ENCODE measurements at regions of chr12 and their contacts with region 1.

Region 1: DNA sequence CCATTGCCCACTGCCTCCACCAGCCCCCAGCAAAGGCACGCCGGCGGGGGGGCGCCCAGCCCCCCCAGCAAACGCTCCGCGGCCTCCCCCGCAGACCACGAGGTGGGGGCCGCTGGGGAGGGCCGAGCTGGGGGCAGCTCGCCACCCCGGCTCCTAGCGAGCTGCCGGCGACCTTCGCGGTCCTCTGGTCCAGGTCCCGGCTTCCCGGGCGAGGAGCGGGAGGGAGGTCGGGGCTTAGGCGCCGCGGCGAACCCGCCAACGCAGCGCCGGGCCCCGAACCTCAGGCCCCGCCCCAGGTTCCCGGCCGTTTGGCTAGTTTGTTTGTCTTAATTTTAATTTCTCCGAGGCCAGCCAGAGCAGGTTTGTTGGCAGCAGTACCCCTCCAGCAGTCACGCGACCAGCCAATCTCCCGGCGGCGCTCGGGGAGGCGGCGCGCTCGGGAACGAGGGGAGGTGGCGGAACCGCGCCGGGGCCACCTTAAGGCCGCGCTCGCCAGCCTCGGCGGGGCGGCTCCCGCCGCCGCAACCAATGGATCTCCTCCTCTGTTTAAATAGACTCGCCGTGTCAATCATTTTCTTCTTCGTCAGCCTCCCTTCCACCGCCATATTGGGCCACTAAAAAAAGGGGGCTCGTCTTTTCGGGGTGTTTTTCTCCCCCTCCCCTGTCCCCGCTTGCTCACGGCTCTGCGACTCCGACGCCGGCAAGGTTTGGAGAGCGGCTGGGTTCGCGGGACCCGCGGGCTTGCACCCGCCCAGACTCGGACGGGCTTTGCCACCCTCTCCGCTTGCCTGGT is at the start of gene CDKN1B:
- DNase-seq: peak; percentile 92
- H3K4me3 Mint-ChIP-seq: peak within 1 kb of the TSS; percentile 98
- H3K27ac Mint-ChIP-seq: peak within 1 kb of the TSS; percentile 98
- H3K4me1 Mint-ChIP-seq: peaks cover 45% of the 10 kb centered on the region
- H3K27me3 Mint-ChIP-seq: no peaks in the 10 kb centered on the region
- total RNA-seq, gene CDKN1B: 52.4 to 52.8 TPM

Region 2: GRCh38 chr12:12486661-12487240 is 230.2 kb before region 1 on chr12:
- CTCF ChIA-PET with region 1: no interaction called
- POLR2A ChIA-PET with region 1: interaction called, 10 read pairs
- intact Hi-C with region 1: loop called (anchors 1 kb)
- DNase-seq: peak; percentile 59
- H3K4me3 Mint-ChIP-seq: peak overlapping the region; percentile 6
- H3K27ac Mint-ChIP-seq: peak overlapping the region; percentile 99
- H3K4me1 Mint-ChIP-seq: peaks cover 56% of the 10 kb centered on the region
- H3K27me3 Mint-ChIP-seq: no peaks in the 10 kb centered on the region

Region 3: DNA sequence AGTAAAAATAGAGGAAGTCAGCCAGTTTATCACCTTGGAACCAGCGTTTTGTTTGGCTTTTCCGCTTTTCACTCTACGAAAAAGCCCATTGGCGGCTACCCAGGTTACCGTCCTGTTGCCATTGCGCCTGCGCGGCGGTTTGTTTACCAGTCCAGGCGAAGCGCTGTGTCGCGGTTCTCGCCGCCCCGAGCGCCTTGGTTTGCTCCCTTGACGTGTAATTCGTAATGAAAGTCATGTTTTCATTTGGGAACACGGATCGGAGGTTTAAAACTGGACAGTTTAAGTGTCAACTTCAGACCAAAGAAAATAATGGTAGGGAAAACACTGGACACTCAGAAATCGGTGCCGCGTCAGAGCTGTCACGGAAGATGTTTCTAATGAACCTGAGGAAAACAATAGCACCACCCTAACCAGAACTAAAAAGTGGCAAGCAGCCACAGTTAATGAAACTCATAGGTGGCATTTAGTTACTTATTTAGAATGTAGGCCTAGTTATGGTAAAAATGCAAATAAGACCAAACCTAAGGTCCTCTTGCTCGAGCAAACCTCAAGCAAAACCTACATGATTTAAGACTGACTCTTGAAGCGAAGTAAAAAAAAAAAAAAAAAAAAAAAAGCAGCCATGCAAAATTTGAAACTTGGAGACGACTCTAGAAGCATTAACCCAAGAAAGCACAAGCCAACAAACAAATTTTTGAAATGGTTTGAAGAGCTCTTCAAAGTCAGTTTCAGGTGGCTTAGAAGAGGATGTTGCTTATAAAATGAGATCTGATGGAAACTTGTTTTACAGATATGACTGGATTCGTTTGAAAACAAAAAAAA is 20.2 kb before region 1 on chr12:
- CTCF ChIA-PET with region 1: interaction called, 11 read pairs
- POLR2A ChIA-PET with region 1: interaction called, 133 read pairs
- intact Hi-C with region 1: loop called (anchors 1 kb)
- DNase-seq: peak; percentile 92
- H3K4me3 Mint-ChIP-seq: peak overlapping the region; percentile 92
- H3K27ac Mint-ChIP-seq: peak overlapping the region; percentile 98
- H3K4me1 Mint-ChIP-seq: peaks cover 65% of the 10 kb centered on the region
- H3K27me3 Mint-ChIP-seq: no peaks in the 10 kb centered on the region

Region 4: GRCh38 chr12:12704593-12705230 is 12.3 kb before region 1 on chr12:
- CTCF ChIA-PET with region 1: interaction called, 7 read pairs
- POLR2A ChIA-PET with region 1: interaction called, 133 read pairs
- intact Hi-C with region 1: loop called (anchors 1 kb)
- DNase-seq: peak; percentile 34
- H3K4me3 Mint-ChIP-seq: no peak overlapping the region
- H3K27ac Mint-ChIP-seq: no peak overlapping the region
- H3K4me1 Mint-ChIP-seq: peaks cover 29% of the 10 kb centered on the region
- H3K27me3 Mint-ChIP-seq: no peaks in the 10 kb centered on the region

Region 5: GRCh38 chr12:12736759-12737676 is 20.0 kb after region 1 on chr12:
- CTCF ChIA-PET with region 1: interaction called, 33 read pairs
- POLR2A ChIA-PET with region 1: interaction called, 46 read pairs
- intact Hi-C with region 1: loop called (anchors 1 kb)
- DNase-seq: peak; percentile 76
- H3K4me3 Mint-ChIP-seq: peak overlapping the region; percentile 59
- H3K27ac Mint-ChIP-seq: peak overlapping the region; percentile 88
- H3K4me1 Mint-ChIP-seq: peaks cover 46% of the 10 kb centered on the region
- H3K27me3 Mint-ChIP-seq: no peaks in the 10 kb centered on the region

Region 6: DNA sequence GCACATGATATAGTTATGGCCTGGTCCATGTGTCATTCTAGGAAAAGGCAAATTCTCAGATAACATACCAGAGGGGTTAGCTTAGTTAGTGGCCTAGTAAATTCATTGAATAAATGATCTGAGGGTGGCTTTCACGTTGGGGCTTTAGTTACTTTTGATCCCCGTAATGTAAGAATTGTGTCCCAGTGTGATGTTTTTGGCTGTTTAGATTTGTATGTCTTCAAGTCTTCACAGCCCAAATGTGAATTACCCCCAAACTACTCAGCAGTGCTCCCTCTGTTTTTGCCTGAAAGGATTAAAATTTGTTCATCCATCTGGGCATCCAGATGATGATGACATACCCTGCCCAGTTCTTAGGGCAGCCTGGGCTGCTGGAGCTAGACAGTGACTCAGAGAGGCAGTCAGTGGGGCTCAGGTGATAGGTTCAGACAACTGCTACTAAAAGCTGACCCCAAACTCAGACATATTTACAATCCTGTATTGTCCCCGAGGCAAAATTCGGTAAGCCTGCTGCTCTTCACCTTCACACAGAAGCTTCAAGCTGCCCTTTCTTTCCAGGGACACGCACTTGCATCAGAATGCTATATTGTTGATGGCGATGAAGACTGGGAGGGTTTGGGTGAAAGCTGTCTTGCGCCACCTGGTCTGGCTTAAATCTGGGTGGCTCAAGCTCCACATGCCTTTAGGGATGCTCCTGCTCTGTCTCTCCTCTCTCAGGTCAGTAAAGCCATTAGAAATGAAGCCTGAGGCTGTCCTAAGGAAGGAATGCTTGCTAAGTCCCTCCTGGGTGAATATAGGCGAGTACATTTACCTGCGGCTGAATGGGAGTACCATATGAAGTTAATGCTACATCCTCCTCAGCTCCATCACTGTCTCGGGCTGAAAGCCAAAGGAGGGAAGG is 224.7 kb after region 1 on chr12:
- CTCF ChIA-PET with region 1: no interaction called
- POLR2A ChIA-PET with region 1: no interaction called
- intact Hi-C with region 1: no loop called
- DNase-seq: no peak
- H3K4me3 Mint-ChIP-seq: no peak overlapping the region
- H3K27ac Mint-ChIP-seq: no peak overlapping the region
- H3K4me1 Mint-ChIP-seq: no peaks in the 10 kb centered on the region
- H3K27me3 Mint-ChIP-seq: no peaks in the 10 kb centered on the region

Measured in activated CD4-positive, alpha-beta memory T cell treated with anti-CD3 and anti-CD28 coated beads for 36 hours (primary cell).